ENCODE measurements at regions of chr17 and their contacts with region 1.

Region 1: DNA sequence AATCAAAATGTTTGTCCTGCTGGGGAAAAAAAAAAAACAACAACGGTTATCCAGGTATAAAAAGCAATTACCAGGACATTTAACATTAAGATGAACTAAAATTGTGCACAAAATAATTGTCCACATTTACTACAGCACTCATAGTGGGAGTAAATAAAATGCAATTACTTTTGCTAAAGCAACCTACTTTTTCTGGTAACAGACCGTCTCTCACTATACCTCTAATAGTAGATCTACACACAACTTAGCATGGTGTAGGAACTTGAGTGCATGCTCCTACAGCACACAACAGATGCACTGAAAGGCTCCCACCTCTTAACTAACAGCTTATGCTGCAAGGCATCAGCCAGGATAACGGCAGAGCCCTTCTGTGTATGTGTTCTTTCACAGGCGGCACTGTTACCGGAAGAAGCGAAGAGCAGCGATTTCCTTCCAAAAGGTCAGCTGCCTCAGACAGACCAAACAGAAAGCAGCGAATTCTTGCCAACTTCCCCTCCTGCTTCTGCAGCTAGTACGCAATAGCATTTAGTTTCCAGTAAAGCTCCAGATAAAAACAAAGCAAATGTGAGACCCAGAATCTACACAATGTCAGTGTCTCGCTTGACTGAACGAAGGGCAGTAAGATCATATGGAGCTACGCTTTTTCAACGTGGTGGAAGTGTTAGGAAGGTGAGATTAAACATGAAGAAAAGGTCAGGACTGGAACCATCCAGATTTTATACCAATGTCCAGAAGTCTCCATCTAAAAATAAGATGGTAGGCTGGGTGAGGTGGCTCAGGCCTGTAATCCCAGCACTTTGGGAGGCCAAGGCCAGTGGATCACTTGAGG is 27.6 kb downstream of the STAT5B start:
- DNase-seq: peak; percentile 88
- H3K4me3 Mint-ChIP-seq: peak overlapping the region; percentile 73
- H3K27ac Mint-ChIP-seq: peak overlapping the region; percentile 95
- H3K4me1 Mint-ChIP-seq: peaks cover 68% of the 10 kb centered on the region
- H3K27me3 Mint-ChIP-seq: no peaks in the 10 kb centered on the region

Region 2: DNA sequence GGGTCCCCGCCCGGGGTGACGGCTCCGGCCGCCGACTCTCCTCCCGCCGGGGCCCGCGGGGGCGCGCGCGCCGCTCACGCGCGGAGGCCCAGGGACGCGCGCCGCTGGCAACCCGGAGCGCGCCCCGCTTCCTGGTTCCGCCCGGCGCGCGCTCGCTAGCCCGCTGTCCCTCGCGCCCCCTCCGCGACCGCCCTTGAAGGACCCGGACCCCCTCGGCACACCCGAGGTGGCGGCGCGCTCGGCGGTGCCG is 27.7 kb after region 1 on chr17 and contains the start of gene STAT5B:
- CTCF ChIA-PET with region 1: interaction called, 35 read pairs
- POLR2A ChIA-PET with region 1: interaction called, 271 read pairs
- intact Hi-C with region 1: loop called (anchors 1 kb)
- DNase-seq: peak; percentile 74
- H3K4me3 Mint-ChIP-seq: peak within 1 kb of the TSS; percentile 93
- H3K27ac Mint-ChIP-seq: peak within 1 kb of the TSS; percentile 97
- H3K4me1 Mint-ChIP-seq: peaks cover 34% of the 10 kb centered on the region
- H3K27me3 Mint-ChIP-seq: no peaks in the 10 kb centered on the region
- total RNA-seq, gene STAT5B: 192 to 195 TPM

Measured in activated CD4-positive, alpha-beta memory T cell treated with anti-CD3 and anti-CD28 coated beads for 36 hours (primary cell).